Activated T-helper 2 cell treated with anti-CD3 and anti-CD28 coated beads, Interferon-gamma antibody, Interleukin-2, Interleukin-4, amounts not matched to agents 10 μg/mL and 5 μg/mL and 100 μg/mL, durations not matched to agents 14 hours and 24 hours and 36 hours (primary cell): ENCODE measurements at regions of chr3 and their contacts with region 1.

Region 1: DNA sequence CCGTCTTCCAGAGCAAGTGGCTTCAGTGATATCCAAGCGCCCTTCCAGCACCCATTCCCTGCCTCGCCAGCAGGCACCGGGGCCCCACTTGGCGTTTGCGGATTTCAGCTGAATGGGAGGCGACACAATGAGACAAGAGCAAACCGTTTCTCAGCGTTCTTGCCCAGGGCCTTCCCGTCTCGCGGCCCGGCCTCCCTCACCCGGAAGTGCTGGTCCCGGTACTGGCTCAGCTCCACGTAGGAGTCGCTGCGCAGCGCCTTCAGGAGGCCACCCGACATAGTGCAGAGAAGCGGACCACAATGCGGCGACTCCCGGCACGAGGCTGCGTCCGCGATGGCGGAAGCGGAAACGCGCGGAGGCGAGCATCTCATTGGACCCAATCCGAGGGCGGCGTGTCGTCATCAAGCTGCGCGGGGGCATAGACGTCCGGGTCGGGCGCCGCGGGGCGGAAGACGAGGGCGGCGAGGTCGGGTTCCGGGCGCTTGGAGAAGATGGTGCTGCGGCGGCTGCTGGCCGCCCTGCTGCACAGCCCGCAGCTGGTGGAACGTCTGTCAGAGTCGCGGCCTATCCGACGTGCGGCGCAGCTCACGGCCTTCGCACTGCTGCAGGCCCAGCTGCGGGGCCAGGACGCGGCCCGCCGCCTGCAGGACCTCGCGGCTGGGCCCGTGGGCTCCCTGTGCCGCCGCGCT is at the start of gene NCBP2:
- DNase-seq: peak; percentile 99
- H3K4me3 Mint-ChIP-seq: peak within 1 kb of the TSS; percentile 99
- H3K27ac Mint-ChIP-seq: peak within 1 kb of the TSS; percentile 93
- H3K4me1 Mint-ChIP-seq: peaks cover 41% of the 10 kb centered on the region
- H3K27me3 Mint-ChIP-seq: no peaks in the 10 kb centered on the region
- total RNA-seq, gene NCBP2: 82.2 and 83.9 TPM in 2 replicates

Region 2: DNA sequence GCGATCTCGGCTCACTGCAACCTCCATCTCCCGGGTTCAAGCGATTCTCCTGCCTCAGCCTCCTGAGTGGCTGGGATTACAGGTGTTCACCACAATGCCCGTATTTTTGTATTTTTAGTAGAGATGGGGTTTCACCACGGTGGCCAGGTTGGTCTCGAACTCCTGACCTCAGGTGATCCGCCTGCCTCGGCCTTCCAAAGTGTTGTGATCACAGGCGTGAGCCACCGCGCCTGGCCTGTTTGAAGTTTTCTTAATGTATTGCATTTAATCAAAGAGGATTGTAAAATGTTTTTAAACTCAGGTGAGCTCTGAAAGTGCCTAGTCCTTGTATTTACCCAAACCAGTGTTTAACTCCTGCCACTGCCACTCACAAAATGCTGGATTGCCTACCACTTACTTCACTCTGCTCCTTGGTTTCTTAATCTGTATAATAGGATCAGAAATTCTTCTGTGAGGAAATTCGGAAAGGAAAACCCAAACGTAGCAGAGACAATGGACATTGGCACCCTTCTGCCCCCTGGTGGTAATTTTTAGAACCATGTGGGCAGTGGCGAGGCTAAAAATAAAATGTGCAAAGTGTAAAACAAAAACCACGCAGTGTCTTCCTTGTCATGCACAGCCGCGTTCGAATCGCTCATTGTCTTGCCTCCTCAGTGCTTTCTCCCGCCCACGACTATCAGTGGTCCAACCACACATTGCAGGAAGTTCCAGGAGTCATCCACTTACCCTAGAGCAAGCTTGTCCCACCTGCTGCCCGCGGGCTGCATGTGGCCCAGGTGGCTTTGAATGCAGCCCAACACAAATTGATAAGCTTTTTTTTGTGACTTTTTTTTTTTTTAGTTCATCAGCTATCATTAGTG is 257.6 kb before region 1 on chr3:
- intact Hi-C with region 1: no loop called
- DNase-seq: peak; percentile 61
- H3K4me3 Mint-ChIP-seq: peak overlapping the region; percentile 40
- H3K27ac Mint-ChIP-seq: peak overlapping the region; percentile 47
- H3K4me1 Mint-ChIP-seq: peaks cover 30% of the 10 kb centered on the region
- H3K27me3 Mint-ChIP-seq: no peaks in the 10 kb centered on the region

Region 3: GRCh38 chr3:196711838-196712513 is 230.4 kb before region 1 on chr3 and contains the starts of genes CEP19 and PIGX:
- intact Hi-C with region 1: loop called (anchors 1 kb)
- DNase-seq: peak; percentile 90
- H3K4me3 Mint-ChIP-seq: peak within 1 kb of the TSS; percentile 95
- H3K27ac Mint-ChIP-seq: peak within 1 kb of the TSS; percentile 97
- H3K4me1 Mint-ChIP-seq: peaks cover 32% of the 10 kb centered on the region
- H3K27me3 Mint-ChIP-seq: no peaks in the 10 kb centered on the region
- total RNA-seq, gene CEP19: 3.7 and 4.5 TPM in 2 replicates
- total RNA-seq, gene PIGX: 65.7 and 70.8 TPM in 2 replicates

Region 4: DNA sequence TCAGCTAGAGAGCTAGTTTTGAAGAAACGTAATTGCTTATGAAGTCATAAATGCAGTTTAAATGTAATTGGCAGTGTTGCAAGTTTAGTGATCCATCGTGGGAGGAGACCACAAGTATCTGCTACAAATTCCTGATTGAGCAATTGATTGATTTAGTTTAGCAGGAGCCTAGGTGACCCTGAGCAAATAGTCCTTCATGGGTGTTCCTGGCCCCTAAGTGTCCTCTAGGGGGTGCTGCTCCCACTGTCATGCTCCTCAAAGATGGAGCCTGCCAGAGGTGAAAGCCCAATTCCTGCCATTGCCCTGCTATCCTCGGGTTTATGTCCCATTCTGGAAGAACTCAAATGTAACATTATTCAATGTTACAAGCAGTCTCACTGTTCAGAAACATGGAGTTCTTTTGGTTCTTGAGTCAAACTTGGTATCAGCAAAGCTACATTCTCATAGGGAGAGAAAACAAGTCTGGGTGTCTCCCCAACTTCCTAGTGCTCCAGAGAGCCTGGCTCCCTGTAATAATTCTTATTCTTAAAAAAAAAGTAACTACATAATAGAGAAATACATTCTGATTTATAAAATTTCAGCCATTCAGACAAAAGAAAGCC is 104.5 kb before region 1 on chr3:
- intact Hi-C with region 1: loop called (anchors 1 kb)
- DNase-seq: peak; percentile 61
- H3K4me3 Mint-ChIP-seq: no peak overlapping the region
- H3K27ac Mint-ChIP-seq: no peak overlapping the region
- H3K4me1 Mint-ChIP-seq: peaks cover 3% of the 10 kb centered on the region
- H3K27me3 Mint-ChIP-seq: no peaks in the 10 kb centered on the region

Region 5: DNA sequence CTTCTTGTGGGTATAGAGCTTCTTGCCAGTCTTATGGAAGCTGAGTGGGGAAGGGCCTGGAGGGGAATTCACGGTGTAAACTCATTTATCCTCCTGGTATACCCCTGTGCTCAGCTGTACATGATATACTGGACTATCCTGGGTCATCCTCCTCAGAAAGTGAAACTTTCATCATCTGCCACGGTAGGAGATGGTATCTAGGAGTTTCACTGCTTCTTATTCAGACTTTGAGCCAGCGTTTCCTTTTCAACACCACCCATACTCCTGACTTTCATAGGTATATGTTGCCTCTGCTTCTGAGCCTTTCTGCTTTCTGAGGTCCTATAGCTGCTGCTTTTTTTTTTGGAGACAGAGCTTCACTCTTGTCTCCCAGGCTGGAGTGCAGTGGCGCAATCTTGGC is 59.0 kb before region 1 on chr3:
- intact Hi-C with region 1: loop called (anchors 5 kb)
- DNase-seq: no peak
- H3K4me3 Mint-ChIP-seq: no peak overlapping the region
- H3K27ac Mint-ChIP-seq: peak overlapping the region; percentile 54
- H3K4me1 Mint-ChIP-seq: peaks cover 35% of the 10 kb centered on the region
- H3K27me3 Mint-ChIP-seq: no peaks in the 10 kb centered on the region

Region 6: GRCh38 chr3:197068077-197068476 is 125.7 kb after region 1 on chr3:
- intact Hi-C with region 1: no loop called
- DNase-seq: no peak
- H3K4me3 Mint-ChIP-seq: no peak overlapping the region
- H3K27ac Mint-ChIP-seq: no peak overlapping the region
- H3K4me1 Mint-ChIP-seq: peaks cover 2% of the 10 kb centered on the region
- H3K27me3 Mint-ChIP-seq: no peaks in the 10 kb centered on the region